Esophagus muscularis mucosa (tissue), 4 donors: ENCODE measurements at regions of chr3 and their contacts with region 1.

Region 1: GRCh38 chr3:5011555-5012256 is 32.5 kb downstream of the BHLHE40 start:
- DNase-seq: no peak
- H3K4me3 ChIP-seq: no peak overlapping the region
- H3K27ac ChIP-seq: no peak overlapping the region
- H3K4me1 ChIP-seq: peaks cover 2 to 19% (median 9%) of the 10 kb centered on the region in 4 donors
- H3K27me3 ChIP-seq: no peaks in the 10 kb centered on the region
- CTCF ChIP-seq: no peak
- EP300 ChIP-seq: no peak
- POLR2A ChIP-seq: no peak

Region 2: DNA sequence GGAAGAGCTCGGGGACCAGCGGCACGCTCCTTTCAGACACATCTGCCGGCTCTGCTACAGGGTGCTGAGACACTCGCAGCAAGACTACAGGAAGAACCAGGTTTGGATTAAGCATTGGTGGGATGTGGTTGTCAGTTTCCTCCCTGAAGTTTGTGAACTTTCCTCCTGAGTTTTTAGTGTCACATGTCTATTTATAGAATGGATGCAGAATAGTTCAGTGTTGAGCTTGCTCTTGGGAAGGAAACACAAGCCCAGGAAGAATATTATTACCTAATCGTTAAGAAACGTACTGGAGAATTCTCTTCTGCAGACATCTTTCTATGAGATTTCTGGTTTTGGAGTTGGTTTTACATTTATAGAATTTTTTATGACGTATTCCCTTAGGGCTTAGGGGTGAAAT is 346.5 kb before region 1 on chr3:
- intact Hi-C with region 1: no loop called
- DNase-seq: no peak
- H3K4me3 ChIP-seq: no peak overlapping the region
- H3K27ac ChIP-seq: peak overlapping the region in 3 of 4 donors; percentile 2 to 41 (median 4)
- H3K4me1 ChIP-seq: peaks cover 8 to 15% (median 10%) of the 10 kb centered on the region in 4 donors
- H3K27me3 ChIP-seq: no peaks in the 10 kb centered on the region
- CTCF ChIP-seq: no peak
- EP300 ChIP-seq: no peak
- POLR2A ChIP-seq: no peak

Region 3: DNA sequence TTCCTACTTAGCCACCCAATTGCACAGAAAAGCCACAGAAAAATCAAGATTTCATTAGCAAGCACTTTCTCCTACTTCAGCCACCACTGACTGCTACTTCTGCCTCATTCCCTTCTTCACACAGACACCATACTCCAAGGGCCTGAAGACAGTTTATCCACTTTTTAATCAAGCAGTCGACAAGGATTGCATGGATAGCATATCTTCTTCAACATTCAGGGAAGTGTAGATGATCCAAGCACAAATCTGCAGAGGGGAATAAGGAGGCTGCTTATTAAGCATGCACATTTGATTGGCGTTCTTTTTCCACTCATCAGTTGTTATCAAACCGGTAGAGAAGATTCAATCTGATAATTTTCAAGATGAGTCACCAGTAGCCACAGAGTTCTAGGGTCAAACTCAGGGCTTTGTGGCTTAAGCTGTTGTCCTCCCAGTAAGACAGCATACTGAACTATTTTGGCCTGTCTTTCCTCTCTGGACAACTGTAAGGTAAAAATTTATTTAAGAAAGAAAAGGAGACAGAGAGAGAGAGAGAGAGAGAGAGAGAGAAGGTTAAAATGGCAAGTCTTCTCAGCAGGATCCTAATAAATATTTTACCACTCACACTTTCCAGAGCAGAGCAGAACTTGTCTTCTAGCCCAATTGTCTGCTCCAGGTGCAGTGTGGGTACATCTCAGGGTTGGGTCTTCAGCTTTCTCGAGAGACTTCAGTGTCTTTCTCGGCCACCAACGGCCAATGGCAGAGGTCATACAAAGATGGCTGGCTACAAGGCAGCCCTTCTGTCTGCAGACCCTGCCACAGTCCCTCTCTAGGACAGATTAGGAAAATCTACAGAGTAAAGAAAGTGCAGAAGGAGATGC is 113.0 kb before region 1 on chr3:
- intact Hi-C with region 1: no loop called
- DNase-seq: no peak
- H3K4me3 ChIP-seq: no peak overlapping the region
- H3K27ac ChIP-seq: peak overlapping the region; percentile 58 to 79 (median 64)
- H3K4me1 ChIP-seq: peaks cover 11 to 41% (median 35%) of the 10 kb centered on the region in 4 donors
- H3K27me3 ChIP-seq: no peaks in the 10 kb centered on the region
- CTCF ChIP-seq: no peak
- EP300 ChIP-seq: no peak
- POLR2A ChIP-seq: no peak

Region 4: DNA sequence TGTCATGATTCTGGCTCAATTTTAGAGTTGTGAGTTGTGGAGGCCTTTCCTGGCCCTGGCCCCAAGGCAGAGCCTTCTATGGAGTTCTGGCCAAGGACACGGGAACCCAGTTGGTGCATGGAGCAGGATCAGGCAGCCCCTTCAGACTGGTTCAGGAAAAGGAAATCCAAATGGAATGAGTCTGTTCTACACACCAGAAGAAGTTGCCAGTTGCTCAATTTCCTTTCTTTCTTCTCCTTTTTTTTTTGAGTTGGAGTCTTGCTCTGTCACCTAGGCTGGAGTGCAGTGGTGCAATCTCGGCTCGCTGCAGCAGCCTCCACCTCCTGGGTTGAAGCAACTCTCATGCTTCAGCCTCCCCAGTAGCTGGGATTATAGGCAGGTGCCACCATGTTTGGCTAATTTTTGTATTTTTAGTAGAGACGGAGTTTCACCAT is 61.3 kb before region 1 on chr3:
- intact Hi-C with region 1: loop called (anchors 5 kb)
- DNase-seq: no peak
- H3K4me3 ChIP-seq: no peak overlapping the region
- H3K27ac ChIP-seq: no peak overlapping the region
- H3K4me1 ChIP-seq: peaks cover 0 to 15% (median 10%) of the 10 kb centered on the region in 4 donors
- H3K27me3 ChIP-seq: no peaks in the 10 kb centered on the region
- CTCF ChIP-seq: no peak
- EP300 ChIP-seq: no peak
- POLR2A ChIP-seq: no peak

Region 5: DNA sequence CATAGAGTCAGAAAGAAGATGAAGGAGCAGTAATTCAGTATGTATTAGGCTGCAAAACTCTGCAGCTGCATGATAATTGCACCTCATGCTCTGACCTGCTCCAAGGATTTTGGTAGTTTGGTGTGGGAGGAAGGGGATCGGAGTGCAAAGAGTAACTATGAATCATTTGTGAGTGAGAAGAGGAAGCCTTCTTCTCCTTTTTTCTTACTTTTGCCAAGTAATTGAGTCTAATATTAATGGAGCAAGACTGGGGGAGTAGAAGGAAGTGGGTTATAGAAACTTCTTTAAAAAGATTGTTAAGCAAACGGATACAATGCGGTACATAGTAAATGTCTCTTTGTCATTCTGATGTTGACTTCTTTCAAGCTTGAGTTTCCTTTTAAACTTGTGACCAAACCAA is 452.3 kb after region 1 on chr3:
- intact Hi-C with region 1: no loop called
- DNase-seq: no peak
- H3K4me3 ChIP-seq: no peak overlapping the region
- H3K27ac ChIP-seq: no peak overlapping the region
- H3K4me1 ChIP-seq: no peaks in the 10 kb centered on the region
- H3K27me3 ChIP-seq: no peaks in the 10 kb centered on the region
- CTCF ChIP-seq: no peak
- EP300 ChIP-seq: no peak
- POLR2A ChIP-seq: no peak